Mammary epithelial cell (primary cell): ENCODE measurements at regions of chr1 and their contacts with region 1.

Region 1: DNA sequence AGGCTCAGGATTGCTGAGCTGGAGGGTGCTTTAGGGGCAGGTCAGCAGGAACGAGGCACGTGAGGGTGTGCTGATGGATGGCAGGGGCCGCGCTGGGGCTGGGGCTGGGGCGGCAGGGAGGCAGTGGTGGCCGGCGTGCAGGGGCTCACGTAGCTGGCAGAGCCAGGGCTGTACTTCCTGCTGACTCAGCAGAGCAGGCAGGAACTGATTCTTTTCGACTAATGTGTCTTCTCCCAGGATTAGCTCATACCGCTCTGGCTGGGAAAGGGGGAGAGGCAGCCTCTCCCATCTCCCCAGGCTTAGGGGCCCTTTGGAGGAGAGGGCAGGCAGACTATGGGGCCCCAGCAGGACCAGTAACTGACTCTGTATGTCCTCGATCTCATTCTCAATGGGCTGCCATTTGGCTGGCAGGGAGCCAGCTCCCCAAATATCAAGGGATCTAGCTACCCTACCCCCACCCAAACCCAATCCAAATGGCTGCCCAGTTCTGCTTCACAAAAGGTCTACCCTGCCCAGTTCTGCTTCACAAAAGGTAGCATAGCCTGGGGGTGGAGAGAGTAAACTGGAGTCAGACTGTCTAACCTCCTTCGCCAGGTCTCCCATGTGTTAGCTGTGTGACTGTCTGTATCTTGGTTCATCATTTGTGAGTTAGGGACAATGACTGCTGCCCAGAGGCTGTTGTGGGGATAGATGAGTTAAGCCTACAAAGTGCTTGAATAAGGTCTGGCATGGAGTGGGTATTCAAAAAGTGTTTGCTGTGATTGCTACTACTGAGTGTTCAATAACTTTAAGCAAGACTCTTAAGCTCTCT is 100.1 kb upstream of the SLC2A1 start:
- DNase-seq: peak; percentile 54
- H3K4me3 ChIP-seq: no peak overlapping the region
- H3K27ac ChIP-seq: no peak overlapping the region
- H3K4me1 ChIP-seq: peaks cover 13% of the 10 kb centered on the region
- H3K27me3 ChIP-seq: no peaks in the 10 kb centered on the region
- CTCF ChIP-seq: no peak

Region 2: DNA sequence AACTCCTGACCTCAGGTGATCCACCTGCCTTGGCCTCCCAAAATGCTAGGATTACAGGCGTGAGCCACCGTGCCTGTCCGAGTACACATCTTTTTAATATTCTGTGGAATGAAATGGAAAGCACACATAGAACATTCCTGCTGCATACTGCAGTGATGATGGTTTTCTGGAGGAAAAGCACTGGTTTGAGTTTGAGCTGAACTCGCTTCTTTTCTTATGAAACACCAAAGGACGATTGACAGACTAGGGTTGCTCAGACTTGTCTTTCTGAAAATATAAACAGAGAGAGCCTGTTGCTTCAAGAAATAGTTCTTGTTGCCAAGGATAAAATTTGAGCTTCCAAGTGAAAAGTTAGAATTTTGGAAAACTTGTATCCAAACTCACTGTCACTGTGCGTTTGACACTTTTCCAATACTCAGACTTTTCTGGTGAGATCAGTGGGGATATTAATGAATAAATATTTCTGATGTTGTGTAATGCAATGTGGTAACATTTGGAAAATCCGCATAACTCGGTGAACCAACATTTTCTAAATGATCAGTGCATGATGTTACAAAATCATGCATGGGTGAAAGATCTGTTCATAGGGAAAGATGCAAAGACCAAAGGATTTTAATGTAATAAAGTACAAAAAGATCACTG is 256.8 kb before region 1 on chr1:
- CTCF ChIA-PET with region 1: no interaction called
- dilution Hi-C with region 1: no loop called
- in situ Hi-C with region 1: no loop called
- intact Hi-C with region 1: no loop called
- DNase-seq: no peak
- H3K4me3 ChIP-seq: no peak overlapping the region
- H3K27ac ChIP-seq: no peak overlapping the region
- H3K4me1 ChIP-seq: no peaks in the 10 kb centered on the region
- H3K27me3 ChIP-seq: peaks cover 3% of the 10 kb centered on the region
- CTCF ChIP-seq: no peak

Region 3: GRCh38 chr1:42924082-42924850 is 134.5 kb before region 1 on chr1:
- CTCF ChIA-PET with region 1: no interaction called
- dilution Hi-C with region 1: loop called (anchors 5 kb)
- in situ Hi-C with region 1: no loop called
- intact Hi-C with region 1: no loop called
- DNase-seq: peak; percentile 77
- H3K4me3 ChIP-seq: peak overlapping the region; percentile 28 to 46 (median 35)
- H3K27ac ChIP-seq: no peak overlapping the region
- H3K4me1 ChIP-seq: peaks cover 36% of the 10 kb centered on the region
- H3K27me3 ChIP-seq: no peaks in the 10 kb centered on the region
- CTCF ChIP-seq: peak in 1 of 2 donors; percentile 30

Region 4: GRCh38 chr1:42944246-42945188 is 114.2 kb before region 1 on chr1:
- CTCF ChIA-PET with region 1: no interaction called
- dilution Hi-C with region 1: no loop called
- in situ Hi-C with region 1: no loop called
- intact Hi-C with region 1: no loop called
- DNase-seq: no peak
- H3K4me3 ChIP-seq: no peak overlapping the region
- H3K27ac ChIP-seq: peak overlapping the region; percentile 87
- H3K4me1 ChIP-seq: peaks cover 95% of the 10 kb centered on the region
- H3K27me3 ChIP-seq: no peaks in the 10 kb centered on the region
- CTCF ChIP-seq: no peak

Region 5: DNA sequence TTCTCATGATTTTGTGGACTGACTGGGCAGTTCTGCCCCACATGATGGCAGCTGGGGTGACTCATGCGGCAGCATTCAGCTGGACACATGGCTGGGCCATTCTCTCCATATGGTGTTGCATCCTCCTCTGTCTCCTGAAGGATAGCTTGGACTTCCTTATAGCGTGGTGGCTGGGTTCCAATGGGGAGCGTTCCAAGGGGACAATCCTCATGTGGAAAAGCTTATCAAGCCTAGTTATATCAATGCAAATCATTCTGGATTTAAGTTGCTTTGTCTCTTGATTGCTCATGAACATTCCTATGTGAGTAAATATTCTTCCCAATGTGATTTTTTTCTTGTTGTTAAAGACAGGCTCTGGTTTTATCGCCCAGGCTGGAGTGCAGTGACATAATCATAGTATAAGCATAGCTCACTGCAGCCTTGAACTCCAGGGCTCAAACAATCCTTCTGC is 86.9 kb before region 1 on chr1:
- CTCF ChIA-PET with region 1: no interaction called
- dilution Hi-C with region 1: loop called (anchors 5 kb)
- in situ Hi-C with region 1: no loop called
- intact Hi-C with region 1: no loop called
- DNase-seq: no peak
- H3K4me3 ChIP-seq: no peak overlapping the region
- H3K27ac ChIP-seq: no peak overlapping the region
- H3K4me1 ChIP-seq: peaks cover 14% of the 10 kb centered on the region
- H3K27me3 ChIP-seq: no peaks in the 10 kb centered on the region
- CTCF ChIP-seq: no peak

Region 6: DNA sequence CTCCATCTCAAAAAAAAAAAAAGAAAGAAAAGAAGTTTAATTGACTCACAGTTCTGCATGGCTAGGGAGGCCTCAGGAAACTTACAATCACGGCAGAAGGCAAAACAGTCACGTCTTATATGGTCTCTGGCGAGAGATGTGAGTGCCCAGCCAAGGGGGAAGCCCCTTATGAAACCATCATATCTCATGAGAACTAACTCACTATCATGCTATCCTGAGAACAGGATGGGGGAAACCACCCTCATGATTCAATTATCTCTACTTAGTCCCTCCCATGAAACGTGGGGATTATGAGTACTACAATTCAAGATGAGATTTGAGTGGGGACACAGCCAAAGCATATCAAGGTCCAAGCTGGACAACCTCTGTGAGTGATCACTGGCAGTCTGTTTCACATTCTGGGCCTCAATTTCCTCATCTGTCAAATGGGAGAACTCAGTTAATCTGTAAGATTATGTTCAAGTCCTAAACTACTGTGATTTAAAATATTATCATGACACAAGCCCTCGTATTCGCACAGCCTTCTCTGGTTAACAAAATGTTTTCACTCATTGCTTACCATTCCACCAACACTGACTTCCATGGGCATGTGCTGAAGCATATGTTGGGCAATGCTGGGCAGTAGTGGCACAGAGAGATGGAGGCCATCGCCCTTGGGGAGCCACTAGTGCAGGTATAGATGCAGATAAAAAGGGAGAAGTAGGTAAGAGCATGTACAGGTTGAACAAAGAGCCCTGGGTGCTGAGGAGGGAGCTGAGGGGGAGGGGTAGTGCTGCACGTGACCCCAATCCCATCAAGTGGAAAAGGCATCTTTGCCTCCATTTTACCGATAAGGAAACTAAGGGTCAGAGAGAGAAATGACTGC is 53.9 kb before region 1 on chr1:
- CTCF ChIA-PET with region 1: no interaction called
- dilution Hi-C with region 1: loop called (anchors 5 kb)
- in situ Hi-C with region 1: no loop called
- intact Hi-C with region 1: no loop called
- DNase-seq: no peak
- H3K4me3 ChIP-seq: no peak overlapping the region
- H3K27ac ChIP-seq: no peak overlapping the region
- H3K4me1 ChIP-seq: peaks cover 14% of the 10 kb centered on the region
- H3K27me3 ChIP-seq: no peaks in the 10 kb centered on the region
- CTCF ChIP-seq: no peak

Region 7: DNA sequence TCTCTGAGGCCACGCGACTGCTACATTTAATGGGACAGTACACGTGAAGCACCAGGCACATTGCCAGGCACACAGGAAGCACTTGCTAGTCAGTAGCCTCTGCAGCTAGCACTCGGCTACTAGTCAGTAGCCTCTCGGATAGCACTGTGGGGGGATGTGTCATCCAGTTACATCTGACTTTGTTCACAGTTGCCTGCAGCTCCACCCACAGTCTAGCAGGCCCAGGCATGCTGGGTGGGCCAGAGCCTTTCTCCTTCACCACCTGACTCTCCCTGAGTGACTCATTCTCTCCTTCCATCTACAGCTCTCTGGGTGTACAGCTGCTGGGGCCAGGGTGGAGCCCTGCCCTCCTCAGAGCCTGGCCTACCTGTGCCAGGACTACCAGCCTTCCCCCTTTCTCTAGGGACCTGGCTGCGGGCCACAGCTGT is 523.4 kb after region 1 on chr1:
- CTCF ChIA-PET with region 1: no interaction called
- dilution Hi-C with region 1: no loop called
- in situ Hi-C with region 1: no loop called
- intact Hi-C with region 1: no loop called
- DNase-seq: peak; percentile 99
- H3K4me3 ChIP-seq: no peak overlapping the region
- H3K27ac ChIP-seq: peak overlapping the region; percentile 66
- H3K4me1 ChIP-seq: peaks cover 52% of the 10 kb centered on the region
- H3K27me3 ChIP-seq: no peaks in the 10 kb centered on the region
- CTCF ChIP-seq: no peak